Endothelial cell of umbilical vein (primary cell): ENCODE measurements at regions of chr9 and their contacts with region 1.

Region 1: GRCh38 chr9:87324613-87325194 is 173.0 kb upstream of the DAPK1 start:
- DNase-seq: peak; percentile 60
- H3K4me3 ChIP-seq: no peak overlapping the region
- H3K27ac ChIP-seq: no peak overlapping the region
- H3K4me1 ChIP-seq: no peaks in the 10 kb centered on the region
- H3K27me3 ChIP-seq: no peaks in the 10 kb centered on the region
- CTCF ChIP-seq: peak; percentile 35 to 36
- POLR2A ChIP-seq: no peak

Region 2: DNA sequence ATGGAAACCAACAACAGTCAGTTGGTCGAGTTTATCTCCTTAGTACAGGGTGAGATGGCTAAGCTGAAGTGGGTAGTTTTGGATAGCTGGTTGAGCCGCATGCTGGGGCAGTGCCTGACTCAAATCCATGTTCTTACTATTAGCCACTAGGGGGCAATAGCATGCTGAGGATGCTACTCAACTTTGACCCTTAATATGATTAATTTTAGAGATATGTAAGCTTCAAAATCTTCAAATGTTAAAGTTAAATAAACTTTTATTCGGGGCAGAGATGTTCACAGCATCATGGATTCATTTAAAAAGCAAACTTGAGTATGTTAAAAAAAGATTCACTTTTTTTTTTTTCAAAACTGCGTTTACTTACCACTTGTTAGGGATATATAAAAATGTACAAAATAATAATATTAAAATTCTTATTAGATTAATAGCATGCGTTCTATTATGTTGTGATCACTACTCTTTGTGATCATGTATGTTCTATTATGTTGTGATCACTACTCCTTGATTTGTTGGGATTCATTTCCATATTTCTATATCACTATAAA is 1122.3 kb before region 1 on chr9:
- CTCF ChIA-PET with region 1: interaction called, 16 read pairs
- POLR2A ChIA-PET with region 1: no interaction called
- dilution Hi-C with region 1: no loop called
- intact Hi-C with region 1: loop called (anchors 1 kb)
- DNase-seq: peak; percentile 54
- H3K4me3 ChIP-seq: no peak overlapping the region
- H3K27ac ChIP-seq: no peak overlapping the region
- H3K4me1 ChIP-seq: no peaks in the 10 kb centered on the region
- H3K27me3 ChIP-seq: peaks cover 0 to 1% of the 10 kb centered on the region in 2 experiments
- CTCF ChIP-seq: peak; percentile 71 to 73
- POLR2A ChIP-seq: no peak

Region 3: DNA sequence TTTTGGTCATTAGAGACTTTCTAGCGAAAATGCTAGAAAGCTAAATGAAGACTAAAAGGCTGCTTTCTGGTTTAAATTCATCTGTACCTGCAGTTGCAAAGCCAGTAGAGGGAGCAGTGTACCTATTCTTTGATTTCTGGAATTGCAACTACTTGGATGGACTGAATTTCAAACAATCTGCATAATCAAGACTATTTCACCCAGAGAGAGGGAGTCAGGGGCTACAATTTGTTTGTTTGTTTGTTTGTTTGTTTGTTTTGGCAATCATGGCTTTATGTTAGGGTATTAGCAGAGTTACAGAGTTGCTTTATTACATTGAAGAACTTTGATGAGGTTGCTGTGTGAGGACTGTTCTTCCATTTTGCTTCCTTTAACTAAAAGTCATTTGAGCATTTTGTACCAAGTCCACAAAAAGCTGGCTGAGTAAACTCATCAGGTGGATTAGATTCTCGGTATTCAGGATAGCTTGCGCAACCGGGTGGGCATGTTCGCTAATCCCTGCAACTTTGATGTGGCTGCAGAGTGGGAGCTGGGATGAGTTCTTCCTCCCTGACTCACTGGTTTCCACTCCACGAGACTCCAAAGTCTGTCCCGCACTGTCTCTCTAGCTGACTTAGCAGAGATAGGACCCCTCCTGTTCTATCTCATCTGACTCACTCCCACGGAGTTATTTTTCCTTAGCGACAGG is 890.5 kb before region 1 on chr9:
- CTCF ChIA-PET with region 1: interaction called, 121 read pairs
- POLR2A ChIA-PET with region 1: no interaction called
- dilution Hi-C with region 1: no loop called
- intact Hi-C with region 1: loop called (anchors 1 kb)
- DNase-seq: peak; percentile 38
- H3K4me3 ChIP-seq: no peak overlapping the region
- H3K27ac ChIP-seq: no peak overlapping the region
- H3K4me1 ChIP-seq: no peaks in the 10 kb centered on the region
- H3K27me3 ChIP-seq: no peaks in the 10 kb centered on the region
- CTCF ChIP-seq: peak; percentile 46 to 57
- POLR2A ChIP-seq: no peak

Region 4: GRCh38 chr9:86614871-86615849 is 709.5 kb before region 1 on chr9:
- CTCF ChIA-PET with region 1: no interaction called
- POLR2A ChIA-PET with region 1: no interaction called
- dilution Hi-C with region 1: no loop called
- intact Hi-C with region 1: loop called (anchors 1 kb)
- DNase-seq: no peak
- H3K4me3 ChIP-seq: no peak overlapping the region
- H3K27ac ChIP-seq: no peak overlapping the region
- H3K4me1 ChIP-seq: no peaks in the 10 kb centered on the region
- H3K27me3 ChIP-seq: no peaks in the 10 kb centered on the region
- CTCF ChIP-seq: peak in 1 of 2 donors; percentile 25
- POLR2A ChIP-seq: no peak

Region 5: DNA sequence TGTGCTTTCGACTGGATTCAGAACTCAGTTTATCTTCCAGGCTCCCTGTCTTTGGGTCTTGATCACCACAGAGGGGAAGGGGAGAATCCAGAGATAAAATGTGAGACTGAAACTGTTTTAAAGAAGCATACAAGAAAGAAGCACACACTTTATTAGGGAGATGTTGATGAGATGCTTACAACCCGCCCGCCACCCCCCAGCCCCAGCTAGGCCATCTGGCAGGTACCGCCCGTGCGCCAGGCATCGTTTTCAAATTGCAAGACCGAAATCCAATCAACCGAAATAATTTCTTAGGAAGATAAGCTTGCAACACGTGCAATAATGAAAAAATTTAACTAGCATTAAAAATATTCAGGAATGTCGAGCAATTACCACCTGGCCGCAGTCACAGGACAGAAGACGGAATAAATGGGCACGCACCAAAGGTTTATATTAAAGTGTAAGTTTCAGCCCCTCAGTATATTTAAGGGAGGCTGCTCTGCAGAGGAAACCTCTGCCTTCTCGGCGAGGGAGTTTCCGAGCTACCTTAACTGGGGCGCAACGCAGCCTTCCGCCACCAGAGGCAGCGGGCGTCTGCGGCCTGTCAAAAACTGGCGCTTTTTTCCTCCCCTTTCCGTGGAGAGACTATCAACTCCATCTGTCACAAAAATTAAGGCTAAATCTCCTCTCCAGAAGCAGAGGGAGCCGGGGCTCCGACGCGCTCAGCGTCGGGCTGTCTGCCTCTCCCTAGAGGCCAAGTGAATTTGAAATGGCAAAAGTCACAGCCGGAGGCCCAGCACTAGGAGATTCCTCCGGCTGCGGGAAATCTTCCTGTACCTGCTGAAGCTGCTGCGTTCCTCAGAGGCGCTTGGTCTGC is 376.4 kb before region 1 on chr9:
- CTCF ChIA-PET with region 1: interaction called, 10 read pairs
- POLR2A ChIA-PET with region 1: no interaction called
- dilution Hi-C with region 1: no loop called
- intact Hi-C with region 1: loop called (anchors 5 kb)
- DNase-seq: peak; percentile 61
- H3K4me3 ChIP-seq: peak overlapping the region in 2 of 3 experiments; percentile 30 to 69
- H3K27ac ChIP-seq: no peak overlapping the region
- H3K4me1 ChIP-seq: peaks cover 3% of the 10 kb centered on the region
- H3K27me3 ChIP-seq: peaks cover 12 to 20% of the 10 kb centered on the region in 2 experiments
- CTCF ChIP-seq: peak; percentile 58 to 84
- POLR2A ChIP-seq: no peak

Region 6: GRCh38 chr9:87184956-87185642 is 139.6 kb before region 1 on chr9:
- CTCF ChIA-PET with region 1: no interaction called
- POLR2A ChIA-PET with region 1: no interaction called
- dilution Hi-C with region 1: no loop called
- intact Hi-C with region 1: no loop called
- DNase-seq: no peak
- H3K4me3 ChIP-seq: no peak overlapping the region
- H3K27ac ChIP-seq: no peak overlapping the region
- H3K4me1 ChIP-seq: no peaks in the 10 kb centered on the region
- H3K27me3 ChIP-seq: no peaks in the 10 kb centered on the region
- CTCF ChIP-seq: no peak
- POLR2A ChIP-seq: no peak